ENCODE measurements at regions of chr10 and their contacts with region 1.

Region 1: DNA sequence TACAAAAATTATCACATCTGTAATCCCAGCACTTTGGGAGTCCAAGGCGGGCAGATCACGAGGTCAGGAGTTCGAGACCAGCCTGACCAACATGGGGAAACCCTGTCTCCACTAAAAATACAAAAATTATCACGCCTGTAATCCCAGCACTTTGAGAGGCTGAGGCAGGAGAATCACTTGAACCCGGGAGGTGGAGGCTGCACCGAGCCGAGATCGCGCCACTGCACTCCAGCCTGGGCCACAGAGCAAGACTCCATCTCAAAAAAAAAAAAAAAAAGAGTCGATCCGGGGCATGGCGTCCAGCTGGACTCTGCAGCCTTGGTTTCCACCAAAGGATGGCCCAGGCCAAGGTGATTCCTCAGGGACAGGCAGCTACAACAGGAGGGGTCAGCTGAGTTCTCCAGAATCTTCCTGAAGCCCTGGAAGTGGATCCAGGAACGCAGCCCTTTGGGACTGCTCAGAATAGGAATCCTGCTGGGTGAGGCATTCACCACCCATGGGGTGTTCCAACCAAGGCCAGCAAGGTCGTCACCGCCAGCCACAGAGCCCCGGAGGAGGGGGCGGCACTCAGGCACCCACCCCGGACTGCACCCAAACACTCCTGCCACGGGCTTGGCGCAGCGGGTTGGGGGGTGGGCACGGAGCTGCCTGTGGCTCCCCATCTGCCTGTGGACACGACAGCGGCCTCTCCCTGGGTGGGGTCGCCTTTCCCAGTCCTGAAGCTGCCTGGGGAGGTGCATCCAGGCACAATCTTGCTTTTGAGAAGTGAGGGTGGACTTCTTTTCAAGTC is 12.0 kb upstream of the UTF1 start:
- DNase-seq: no peak
- ATAC-seq: no peak
- H3K4me3 ChIP-seq: no peak overlapping the region
- H3K27ac ChIP-seq: no peak overlapping the region
- H3K4me1 ChIP-seq: no peaks in the 10 kb centered on the region
- H3K27me3 ChIP-seq: no peaks in the 10 kb centered on the region
- CTCF ChIP-seq: no peak

Region 2: DNA sequence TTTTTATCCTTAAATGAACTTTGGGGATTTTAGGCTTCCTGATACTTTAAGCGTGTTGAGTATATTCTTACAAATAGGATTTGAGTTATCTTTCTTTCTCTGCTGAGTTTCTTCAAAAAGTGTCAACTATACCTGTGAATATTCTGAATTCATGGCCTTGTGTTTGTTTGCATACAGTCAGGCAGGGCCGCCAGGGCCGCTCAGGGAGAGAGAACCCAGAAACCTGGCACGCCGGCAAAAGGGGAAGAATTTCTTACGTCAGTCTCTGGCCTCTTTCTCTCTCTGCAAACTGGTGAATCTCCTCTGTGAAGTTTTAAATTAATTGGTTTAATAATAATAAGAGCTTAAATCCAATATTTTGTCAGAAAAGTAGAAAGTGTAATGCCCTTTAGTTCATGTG is 1207.0 kb before region 1 on chr10:
- CTCF ChIA-PET with region 1: no interaction called
- POLR2A ChIA-PET with region 1: no interaction called
- in situ Hi-C with region 1: no loop called
- intact Hi-C with region 1: no loop called
- DNase-seq: no peak
- ATAC-seq: no peak
- H3K4me3 ChIP-seq: no peak overlapping the region
- H3K27ac ChIP-seq: no peak overlapping the region
- H3K4me1 ChIP-seq: no peaks in the 10 kb centered on the region
- H3K27me3 ChIP-seq: peaks cover 16% of the 10 kb centered on the region
- CTCF ChIP-seq: no peak

Region 3: GRCh38 chr10:132866618-132867381 is 351.2 kb before region 1 on chr10:
- CTCF ChIA-PET with region 1: no interaction called
- POLR2A ChIA-PET with region 1: no interaction called
- in situ Hi-C with region 1: no loop called
- intact Hi-C with region 1: no loop called
- DNase-seq: no peak
- ATAC-seq: no peak
- H3K4me3 ChIP-seq: no peak overlapping the region
- H3K27ac ChIP-seq: no peak overlapping the region
- H3K4me1 ChIP-seq: no peaks in the 10 kb centered on the region; the same call in none of the 2 replicates
- H3K27me3 ChIP-seq: 0 out of 2 replicates have a peak, but pooled peaks cover 2% of the 10 kb centered on the region
- CTCF ChIP-seq: no peak

Region 4: DNA sequence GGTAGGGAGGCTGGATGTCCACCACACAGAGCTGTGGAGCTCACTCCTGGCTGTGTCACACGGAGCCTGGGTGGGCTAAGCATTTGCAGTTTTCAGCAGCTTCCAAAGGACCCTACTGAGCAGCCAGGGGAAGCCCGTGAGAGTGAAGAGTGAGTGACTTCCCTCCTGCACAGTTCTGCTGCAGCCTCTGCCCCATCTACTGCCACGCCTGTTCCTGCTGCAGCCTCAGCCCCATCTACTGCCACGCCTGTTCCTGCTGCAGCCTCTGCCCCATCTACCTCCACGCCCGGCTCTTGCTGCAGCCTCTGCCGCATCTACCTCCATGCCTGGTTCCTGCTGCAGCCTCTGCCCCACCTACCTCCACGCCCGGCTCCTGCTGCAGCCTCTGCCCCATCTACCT is 46.5 kb after region 1 on chr10:
- CTCF ChIA-PET with region 1: no interaction called
- POLR2A ChIA-PET with region 1: interaction called, 10 read pairs
- in situ Hi-C with region 1: no loop called
- intact Hi-C with region 1: no loop called
- DNase-seq: no peak
- ATAC-seq: no peak
- H3K4me3 ChIP-seq: no peak overlapping the region
- H3K27ac ChIP-seq: no peak overlapping the region
- H3K4me1 ChIP-seq: peaks cover 22% of the 10 kb centered on the region
- H3K27me3 ChIP-seq: no peaks in the 10 kb centered on the region
- CTCF ChIP-seq: no peak

Region 5: DNA sequence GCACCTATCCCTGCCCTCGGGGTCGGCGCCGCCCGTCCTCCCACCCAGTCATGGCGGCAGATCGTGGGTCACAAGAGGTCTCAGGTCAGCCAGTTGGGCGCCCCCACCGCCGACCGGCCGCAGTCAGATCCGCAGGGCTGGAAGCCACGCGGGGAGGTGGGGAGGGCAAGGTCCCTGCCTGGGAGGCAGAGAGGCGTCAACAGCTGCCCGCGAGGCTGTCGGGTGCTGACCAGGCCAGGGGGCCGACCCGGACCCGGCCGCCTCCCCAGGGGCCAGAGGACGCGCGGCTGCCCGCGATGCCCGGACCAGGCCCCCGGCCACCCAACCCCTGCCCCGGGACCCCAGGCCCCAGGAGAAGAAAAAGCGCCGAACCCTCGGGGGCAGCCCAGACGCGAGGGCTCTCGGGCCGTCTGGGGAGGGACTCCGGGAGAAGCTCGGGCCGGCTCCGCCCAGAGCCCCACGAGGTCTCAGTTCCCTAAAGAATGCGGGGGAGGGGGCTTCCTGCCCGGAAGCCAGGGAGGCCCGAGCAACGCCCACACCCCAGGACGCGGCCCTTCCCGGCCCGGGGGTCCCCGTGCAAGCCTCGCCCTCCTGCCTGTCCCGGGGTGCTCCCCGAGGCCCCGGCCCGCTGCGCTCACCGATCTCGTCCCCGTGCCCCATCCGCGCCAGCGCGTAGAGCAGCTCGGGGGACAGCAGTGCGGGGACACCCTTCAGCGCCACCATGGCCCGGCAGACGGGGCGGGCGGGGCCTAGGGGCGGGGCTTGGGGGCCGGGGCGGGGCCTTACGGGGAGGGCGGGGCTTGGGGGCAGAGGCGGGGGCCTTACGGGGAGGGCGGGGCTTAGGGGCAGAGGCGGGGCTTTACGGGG is 139.5 kb after region 1 on chr10 and contains the start of gene FUOM:
- CTCF ChIA-PET with region 1: no interaction called
- POLR2A ChIA-PET with region 1: no interaction called
- in situ Hi-C with region 1: no loop called
- intact Hi-C with region 1: no loop called
- DNase-seq: no peak
- ATAC-seq: peak; percentile 69
- H3K4me3 ChIP-seq: peak within 1 kb of the TSS; percentile 59 to 72
- H3K27ac ChIP-seq: peak within 1 kb of the TSS; percentile 71
- H3K4me1 ChIP-seq: no peaks in the 10 kb centered on the region; the same call in 1 of the 2 replicates
- H3K27me3 ChIP-seq: no peaks in the 10 kb centered on the region
- CTCF ChIP-seq: no peak
- total RNA-seq, gene FUOM: 39.6 TPM

Measured in Panc1 (cell line).